Activated CD8-positive, alpha-beta memory T cell treated with anti-CD3 and anti-CD28 coated beads, Interleukin-2, amount 10 ng/mL, durations not matched to agents 7 days and 5 days (primary cell): ENCODE measurements at regions of chr14 and their contacts with region 1.

Region 1: GRCh38 chr14:74945823-74946682 is 9.3 kb downstream of the PGF start:
- DNase-seq: peak; percentile 87
- ATAC-seq: peak; percentile 78
- H3K4me3 Mint-ChIP-seq: peak overlapping the region; percentile 18
- H3K27ac Mint-ChIP-seq: no peak overlapping the region
- H3K4me1 Mint-ChIP-seq: peaks cover 22% of the 10 kb centered on the region
- H3K27me3 Mint-ChIP-seq: no peaks in the 10 kb centered on the region

Region 2: DNA sequence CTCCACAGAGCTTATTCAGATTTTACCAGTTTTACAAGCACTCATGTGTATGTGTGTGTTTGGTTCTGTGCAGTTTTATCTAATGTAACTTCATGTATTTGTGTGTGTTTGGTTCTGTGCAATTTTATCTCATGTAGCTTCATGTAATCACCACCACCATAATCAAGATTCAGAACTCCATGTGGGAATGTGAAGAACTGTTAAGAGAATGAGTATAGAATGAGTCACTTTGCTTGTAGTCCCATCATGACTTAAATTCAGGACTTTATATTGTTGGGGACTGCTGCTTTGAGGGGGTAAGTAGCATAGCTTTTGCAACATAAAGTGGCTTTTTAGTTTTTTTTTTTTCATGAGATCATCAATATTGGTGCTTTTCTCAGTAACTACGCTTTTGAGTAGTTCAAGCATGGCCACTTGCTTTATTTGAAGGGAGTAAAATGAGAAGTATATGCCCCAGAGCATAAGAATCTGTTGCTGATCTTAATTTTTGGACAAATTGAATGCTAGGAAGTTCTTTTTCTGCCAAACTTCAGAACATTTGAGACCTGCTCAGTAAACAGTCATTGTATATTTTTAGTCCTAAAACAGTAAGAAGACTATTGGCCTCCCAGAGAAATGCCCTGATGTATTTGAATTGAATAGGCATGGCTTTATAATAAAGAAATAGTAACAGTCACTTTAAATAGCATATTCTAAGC is 98.9 kb before region 1 on chr14:
- CTCF ChIA-PET with region 1: no interaction called
- DNase-seq: no peak
- ATAC-seq: no peak
- H3K4me3 Mint-ChIP-seq: no peak overlapping the region
- H3K27ac Mint-ChIP-seq: no peak overlapping the region
- H3K4me1 Mint-ChIP-seq: peaks cover 5% of the 10 kb centered on the region
- H3K27me3 Mint-ChIP-seq: no peaks in the 10 kb centered on the region

Region 3: DNA sequence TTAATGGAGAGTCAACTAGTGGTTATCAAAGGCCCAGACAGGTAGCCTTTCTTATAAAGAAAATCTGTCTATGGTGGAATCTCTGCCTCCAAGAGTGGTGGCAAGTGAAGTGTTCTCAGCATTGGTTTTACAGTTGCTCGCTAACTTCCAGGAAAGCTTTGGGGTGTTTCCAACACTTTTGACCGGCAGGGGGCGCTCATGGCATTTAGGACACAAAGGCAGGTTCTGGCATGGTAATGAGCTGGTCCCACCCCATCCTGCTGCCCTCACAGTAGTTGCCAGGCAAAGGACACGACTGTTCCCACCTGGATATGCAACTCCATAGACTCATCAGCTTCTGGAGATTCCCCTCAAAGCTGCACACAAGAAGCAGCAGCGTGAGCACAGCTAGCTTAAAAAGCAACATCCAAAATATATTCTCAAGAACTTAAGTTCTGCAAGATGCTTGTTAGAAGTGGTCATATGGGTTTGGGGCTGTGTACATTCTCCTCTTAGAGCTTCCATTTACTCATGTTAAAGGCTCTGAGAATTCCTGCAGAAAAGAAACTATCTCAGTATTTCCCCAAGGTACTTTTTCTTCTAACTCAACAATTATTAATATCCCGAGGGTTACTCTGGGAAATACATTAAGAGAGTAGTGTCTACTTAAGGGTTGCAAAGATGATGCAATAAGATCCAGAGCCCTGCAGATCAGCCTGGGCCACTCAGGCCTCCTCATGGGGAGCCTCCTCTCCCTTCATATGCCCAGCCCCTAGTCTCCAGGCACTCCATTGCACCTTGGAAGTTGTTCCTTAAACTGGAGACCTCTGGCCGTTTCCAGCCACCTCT is 84.9 kb before region 1 on chr14:
- CTCF ChIA-PET with region 1: interaction called, 60 read pairs
- DNase-seq: peak; percentile 93
- ATAC-seq: peak; percentile 94
- H3K4me3 Mint-ChIP-seq: no peak overlapping the region
- H3K27ac Mint-ChIP-seq: no peak overlapping the region
- H3K4me1 Mint-ChIP-seq: peaks cover under 1% of the 10 kb centered on the region
- H3K27me3 Mint-ChIP-seq: no peaks in the 10 kb centered on the region

Region 4: DNA sequence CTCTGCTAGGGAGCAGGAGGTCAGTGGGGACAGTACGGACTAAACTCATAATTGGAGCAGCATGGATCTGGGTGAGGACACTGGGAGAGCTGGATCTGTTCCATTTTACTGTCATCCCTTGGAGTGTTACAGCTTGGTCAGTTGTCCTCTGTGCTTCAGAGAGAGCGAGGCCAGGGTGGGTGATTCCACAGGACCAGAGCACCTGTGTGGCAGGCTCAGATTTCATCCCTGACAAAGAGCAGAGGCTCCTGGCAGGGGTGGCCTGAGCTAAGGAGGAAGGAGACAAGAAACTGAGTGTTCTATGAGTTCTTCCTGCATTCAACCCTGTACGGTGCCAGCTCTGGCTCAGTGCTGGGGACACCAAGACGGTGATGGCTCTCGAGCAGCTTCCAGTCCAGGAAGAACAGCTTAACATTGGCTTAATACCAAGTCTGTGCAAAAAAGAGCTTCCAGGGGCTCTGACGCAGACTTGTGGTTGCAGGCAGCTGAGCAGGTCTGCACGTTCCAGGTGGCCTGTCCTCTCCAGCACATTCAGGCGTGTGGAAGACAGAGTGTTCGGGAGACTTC is 17.7 kb after region 1 on chr14:
- CTCF ChIA-PET with region 1: interaction called, 13 read pairs
- DNase-seq: no peak
- ATAC-seq: peak; percentile 23
- H3K4me3 Mint-ChIP-seq: no peak overlapping the region
- H3K27ac Mint-ChIP-seq: no peak overlapping the region
- H3K4me1 Mint-ChIP-seq: peaks cover 5% of the 10 kb centered on the region
- H3K27me3 Mint-ChIP-seq: peaks cover 29% of the 10 kb centered on the region

Region 5: DNA sequence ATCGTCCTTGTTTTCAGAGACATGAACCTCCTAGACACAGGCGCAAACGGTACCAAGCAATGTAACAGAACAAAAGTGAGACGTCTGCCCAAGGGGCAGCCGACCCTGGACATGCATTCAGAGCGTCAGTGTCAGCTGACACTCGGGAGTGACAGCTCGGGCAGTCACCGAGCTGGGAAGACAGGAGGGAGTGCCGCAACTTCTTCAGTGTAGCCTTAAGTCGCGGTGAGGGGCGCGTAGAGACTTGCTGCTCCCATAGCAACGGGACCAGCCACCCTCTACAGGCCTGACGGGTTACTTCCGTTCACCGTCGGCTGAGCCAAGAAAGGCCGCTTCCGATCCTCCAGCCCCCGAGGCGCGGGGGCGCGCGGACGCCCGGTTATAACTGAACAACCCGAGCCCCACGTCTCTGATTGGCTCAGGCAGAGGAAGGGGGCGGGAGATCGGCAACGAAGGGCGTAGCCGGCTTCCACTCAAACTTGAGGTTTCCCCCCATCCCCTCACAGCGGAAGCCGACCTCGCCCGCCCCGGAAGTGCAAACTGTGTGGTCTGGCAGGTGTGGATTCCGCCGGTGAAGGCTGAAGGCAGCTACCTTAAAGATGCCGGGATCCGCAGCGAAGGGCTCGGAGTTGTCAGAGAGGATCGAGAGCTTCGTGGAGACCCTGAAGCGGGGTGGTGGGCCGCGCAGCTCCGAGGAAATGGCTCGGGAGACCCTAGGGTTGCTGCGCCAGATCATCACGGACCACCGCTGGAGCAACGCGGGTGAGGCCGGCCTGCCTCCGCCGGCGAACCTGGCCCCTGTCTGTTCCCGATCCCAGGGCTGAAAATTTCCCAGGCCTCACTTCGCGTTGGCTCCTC is 56.6 kb after region 1 on chr14 and contains the start of gene EIF2B2:
- CTCF ChIA-PET with region 1: interaction called, 14 read pairs
- DNase-seq: peak; percentile 100
- ATAC-seq: peak; percentile 98
- H3K4me3 Mint-ChIP-seq: peak within 1 kb of the TSS; percentile 95
- H3K27ac Mint-ChIP-seq: peak within 1 kb of the TSS; percentile 92
- H3K4me1 Mint-ChIP-seq: peaks cover 37% of the 10 kb centered on the region
- H3K27me3 Mint-ChIP-seq: no peaks in the 10 kb centered on the region
- total RNA-seq, gene EIF2B2: 47.9 to 54.0 TPM

Region 6: GRCh38 chr14:75063407-75064213 is 117.6 kb after region 1 on chr14 and contains the start of gene ACYP1:
- CTCF ChIA-PET with region 1: interaction called, 10 read pairs
- DNase-seq: peak; percentile 95
- ATAC-seq: peak; percentile 99
- H3K4me3 Mint-ChIP-seq: peak within 1 kb of the TSS; percentile 100
- H3K27ac Mint-ChIP-seq: peak within 1 kb of the TSS; percentile 98
- H3K4me1 Mint-ChIP-seq: peaks cover 46% of the 10 kb centered on the region
- H3K27me3 Mint-ChIP-seq: no peaks in the 10 kb centered on the region
- total RNA-seq, gene ACYP1: 45.2 to 59.5 TPM